ENCODE measurements at regions of chr9 and their contacts with region 1.

Region 1: GRCh38 chr9:129737479-129738274 is 15.2 kb downstream of the PTGES start:
- DNase-seq: peak in 1 of 2 experiments; percentile 97
- H3K4me3 ChIP-seq: peak overlapping the region; percentile 38 to 77 (median 46)
- H3K27ac ChIP-seq: no peak overlapping the region
- H3K4me1 ChIP-seq: peaks cover 0 to 4% (median 1%) of the 10 kb centered on the region in 4 experiments; a peak in 5 of 7 replicates
- H3K27me3 ChIP-seq: no peaks in the 10 kb centered on the region; a peak in 2 of 7 replicates
- CTCF ChIP-seq: peak; percentile 83 to 89 (median 88)
- EP300 ChIP-seq: no peak
- POLR2A ChIP-seq: no peak
- RAD21 ChIP-seq: peak; percentile 76 to 80

Region 2: GRCh38 chr9:129641746-129642513 is 95.7 kb before region 1 on chr9 and contains the start of gene ASB6:
- CTCF ChIA-PET with region 1: interaction called, 12 read pairs
- POLR2A ChIA-PET with region 1: no interaction called
- DNase-seq: peak; percentile 83 to 100
- H3K4me3 ChIP-seq: peak within 1 kb of the TSS; percentile 66 to 98 (median 84)
- H3K27ac ChIP-seq: no peak within 1 kb of the TSS
- H3K4me1 ChIP-seq: peaks cover 0 to 10% (median 6%) of the 10 kb centered on the region in 4 experiments; a peak in 4 of 7 replicates
- H3K27me3 ChIP-seq: no peaks in the 10 kb centered on the region
- CTCF ChIP-seq: peak in 1 of 3 experiments; percentile 97; a peak in 3 of 4 replicates
- EP300 ChIP-seq: peak in 1 of 2 experiments; percentile 73; a peak in 1 of 3 replicates
- POLR2A ChIP-seq: peak in 1 of 2 experiments; percentile 62; a peak in 1 of 3 replicates
- RAD21 ChIP-seq: peak; percentile 92 to 93
- total RNA-seq, gene ASB6: 17.3 TPM in 2 replicates

Region 3: DNA sequence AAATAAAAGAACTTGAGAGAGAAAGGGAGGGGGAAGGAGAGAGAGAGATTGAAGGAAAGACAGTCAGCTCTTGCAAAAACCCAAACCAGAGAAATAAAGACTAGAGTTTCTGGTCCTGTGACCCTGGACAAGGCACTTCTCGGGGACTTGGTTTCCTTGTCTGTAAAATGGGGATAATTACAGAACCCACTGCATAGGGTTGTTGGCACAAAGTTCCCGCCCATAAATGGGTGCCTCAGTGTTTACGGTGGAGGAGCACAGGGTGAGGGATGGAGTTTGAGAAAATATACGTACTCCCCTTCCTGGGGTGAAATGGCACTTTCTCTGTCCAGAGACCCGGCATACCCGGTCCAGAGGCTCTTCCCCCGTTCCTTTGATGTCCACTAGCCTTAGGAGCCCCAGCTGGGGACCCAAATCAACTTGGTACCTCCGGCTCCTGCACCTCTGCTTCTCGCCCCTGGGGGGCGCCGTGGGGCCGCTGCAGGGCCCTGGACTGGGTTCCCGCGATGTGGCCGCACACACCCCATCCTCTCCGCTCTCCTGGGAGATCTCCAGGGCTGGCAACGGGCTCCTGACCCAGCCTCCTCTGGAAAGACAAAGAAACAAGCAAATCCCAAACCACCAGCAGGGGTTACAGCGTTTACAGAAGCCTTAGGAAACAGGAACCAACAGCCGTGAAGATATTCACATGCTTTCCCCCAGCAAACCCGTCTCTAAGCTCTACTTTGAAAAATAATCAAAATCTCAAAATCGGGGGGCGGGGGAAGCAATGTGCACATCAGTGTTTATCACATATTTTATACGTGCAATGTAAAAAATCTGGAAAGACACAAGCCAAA is 11.1 kb before region 1 on chr9:
- CTCF ChIA-PET with region 1: interaction called, 189 read pairs
- POLR2A ChIA-PET with region 1: interaction called, 10 read pairs
- DNase-seq: peak; percentile 76 to 93
- H3K4me3 ChIP-seq: no peak overlapping the region
- H3K27ac ChIP-seq: no peak overlapping the region
- H3K4me1 ChIP-seq: peaks cover 0 to 2% (median 0%) of the 10 kb centered on the region in 4 experiments; a peak in 1 of 7 replicates
- H3K27me3 ChIP-seq: no peaks in the 10 kb centered on the region
- CTCF ChIP-seq: peak; percentile 80 to 96 (median 91)
- EP300 ChIP-seq: 0 out of 3 replicates have a peak, but pooled peaks of 1 of the 2 experiments have one; percentile 43
- POLR2A ChIP-seq: no peak
- RAD21 ChIP-seq: peak; percentile 79 to 88

Region 4: GRCh38 chr9:129761901-129762364 is 24.3 kb after region 1 on chr9:
- CTCF ChIA-PET with region 1: interaction called, 168 read pairs
- POLR2A ChIA-PET with region 1: interaction called, 4 read pairs
- DNase-seq: no peak
- H3K4me3 ChIP-seq: no peak overlapping the region
- H3K27ac ChIP-seq: no peak overlapping the region
- H3K4me1 ChIP-seq: peaks cover 0 to 2% (median 0%) of the 10 kb centered on the region in 4 experiments; a peak in 1 of 7 replicates
- H3K27me3 ChIP-seq: no peaks in the 10 kb centered on the region
- CTCF ChIP-seq: no peak
- EP300 ChIP-seq: no peak
- POLR2A ChIP-seq: no peak
- RAD21 ChIP-seq: no peak

Region 5: DNA sequence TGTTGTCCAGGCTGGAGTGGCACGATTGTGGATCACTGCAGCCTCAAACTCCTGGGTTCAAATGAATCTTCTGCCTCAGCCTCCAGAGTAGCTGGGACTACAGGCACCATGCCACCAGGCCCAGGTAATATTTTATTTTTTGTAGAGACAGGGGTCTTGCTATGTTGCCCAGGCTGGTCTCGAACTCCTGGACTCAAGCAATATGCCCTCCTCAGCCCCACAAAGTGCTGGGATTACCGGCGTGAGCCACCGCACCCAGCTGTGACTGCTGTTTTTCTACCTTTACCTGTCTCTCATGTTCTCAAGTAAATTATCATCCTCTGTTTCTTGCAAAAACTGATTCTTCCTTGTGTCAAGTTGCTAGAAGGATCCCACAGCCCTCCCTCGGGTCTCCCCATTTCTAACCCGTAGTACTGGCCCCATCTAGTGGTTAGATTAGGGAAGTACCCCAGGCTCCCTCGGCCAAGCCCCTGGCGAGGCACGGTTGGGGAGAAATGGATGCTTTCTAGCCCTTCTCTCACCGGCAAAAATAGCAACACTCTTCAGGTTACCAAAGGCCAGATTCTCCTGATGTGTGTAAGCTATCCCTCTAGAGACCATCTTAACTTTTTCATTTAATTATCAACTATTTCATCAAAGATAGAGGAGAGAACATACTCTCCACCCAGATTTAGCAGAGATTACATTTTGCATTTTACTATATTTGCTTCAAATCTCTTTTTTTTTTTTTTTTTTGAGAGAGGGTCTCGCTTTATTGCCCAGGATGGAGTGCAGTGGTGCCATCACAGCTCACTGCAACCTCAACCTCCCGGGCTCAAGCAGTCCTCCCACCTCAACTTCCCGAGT is 46.1 kb after region 1 on chr9:
- CTCF ChIA-PET with region 1: interaction called, 250 read pairs
- POLR2A ChIA-PET with region 1: interaction called, 4 read pairs
- DNase-seq: peak; percentile 44 to 92
- H3K4me3 ChIP-seq: no peak overlapping the region
- H3K27ac ChIP-seq: no peak overlapping the region
- H3K4me1 ChIP-seq: no peaks in the 10 kb centered on the region
- H3K27me3 ChIP-seq: no peaks in the 10 kb centered on the region
- CTCF ChIP-seq: peak; percentile 82 to 93 (median 89)
- EP300 ChIP-seq: no peak
- POLR2A ChIP-seq: no peak
- RAD21 ChIP-seq: peak; percentile 98